A549 (cell line): ENCODE measurements at regions of chr16 and their contacts with region 1.

Region 1: GRCh38 chr16:84062734-84063640 is 20.4 kb upstream of the SLC38A8 start:
- DNase-seq: peak; percentile 78 to 82
- ATAC-seq: peak; percentile 90 to 99
- H3K4me3 ChIP-seq: no peak overlapping the region
- H3K27ac ChIP-seq: no peak overlapping the region
- H3K4me1 ChIP-seq: no peaks in the 10 kb centered on the region
- CTCF ChIP-seq: peak; percentile 83
- EP300 ChIP-seq: no peak
- POLR2A ChIP-seq: no peak
- RAD21 ChIP-seq: peak; percentile 51 to 54; a peak in 4 of 5 replicates

Region 2: GRCh38 chr16:83762141-83762991 is 300.6 kb before region 1 on chr16:
- CTCF ChIA-PET with region 1: no interaction called
- POLR2A ChIA-PET with region 1: no interaction called
- DNase-seq: no peak
- ATAC-seq: no peak
- H3K4me3 ChIP-seq: no peak overlapping the region
- H3K27ac ChIP-seq: no peak overlapping the region
- H3K4me1 ChIP-seq: no peaks in the 10 kb centered on the region
- CTCF ChIP-seq: no peak
- EP300 ChIP-seq: no peak
- POLR2A ChIP-seq: no peak
- RAD21 ChIP-seq: no peak

Region 3: GRCh38 chr16:83952940-83953795 is 109.8 kb before region 1 on chr16 and contains the start of gene OSGIN1:
- CTCF ChIA-PET with region 1: interaction called, 414 read pairs
- POLR2A ChIA-PET with region 1: no interaction called
- DNase-seq: peak; percentile 90 to 97
- ATAC-seq: peak; percentile 76 to 84
- H3K4me3 ChIP-seq: peak within 1 kb of the TSS; percentile 67
- H3K27ac ChIP-seq: peak within 1 kb of the TSS; percentile 93 to 98
- H3K4me1 ChIP-seq: peaks cover 38% of the 10 kb centered on the region
- CTCF ChIP-seq: no peak
- EP300 ChIP-seq: peak in 1 of 2 experiments; percentile 60; a peak in 1 of 5 replicates
- POLR2A ChIP-seq: peak; percentile 96
- RAD21 ChIP-seq: no peak
- polyA plus RNA-seq, gene OSGIN1: 23.9 and 25.9 TPM in 2 replicates

Region 4: DNA sequence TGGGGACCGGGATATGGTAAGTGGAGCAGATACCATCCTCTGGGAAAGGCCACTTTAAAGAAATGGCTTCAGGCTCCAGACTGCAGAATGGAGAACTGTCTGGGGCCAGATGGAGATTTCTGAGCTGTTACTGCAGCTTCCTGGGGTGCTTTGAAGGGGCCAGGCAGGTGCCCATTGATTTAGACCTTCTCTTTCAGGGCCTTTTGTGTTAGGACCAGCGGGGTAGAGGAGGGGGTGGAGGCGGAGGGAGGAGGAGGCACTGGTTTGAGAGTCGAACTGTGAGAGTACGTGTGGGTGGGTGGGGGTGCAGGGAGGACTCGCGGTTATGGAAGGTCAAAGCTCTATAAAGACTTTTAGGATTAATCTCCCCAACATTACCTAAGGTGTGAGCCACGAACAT is 83.5 kb before region 1 on chr16:
- CTCF ChIA-PET with region 1: interaction called, 27 read pairs
- POLR2A ChIA-PET with region 1: no interaction called
- DNase-seq: no peak
- ATAC-seq: no peak
- H3K4me3 ChIP-seq: no peak overlapping the region
- H3K27ac ChIP-seq: no peak overlapping the region
- H3K4me1 ChIP-seq: no peaks in the 10 kb centered on the region
- CTCF ChIP-seq: no peak
- EP300 ChIP-seq: no peak
- POLR2A ChIP-seq: no peak
- RAD21 ChIP-seq: no peak

Region 5: DNA sequence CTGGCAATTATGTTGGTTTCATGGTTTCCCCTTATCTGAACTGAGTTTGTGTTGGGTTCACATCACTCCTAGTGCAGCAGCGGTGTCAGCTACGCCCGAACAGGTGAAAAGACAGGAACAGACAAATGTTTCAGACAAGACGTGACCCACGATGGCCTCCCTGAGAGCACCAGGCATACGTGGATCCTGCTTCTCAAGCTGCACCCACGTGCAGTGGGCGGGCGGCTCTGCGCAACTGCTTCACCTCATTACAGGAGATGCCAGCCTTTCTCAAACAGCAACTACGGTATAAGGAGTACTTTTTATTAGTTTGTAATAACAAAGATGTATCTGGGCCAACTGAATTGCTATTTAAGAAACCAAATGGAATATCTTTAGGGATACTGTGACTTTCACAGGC is 12.4 kb after region 1 on chr16:
- CTCF ChIA-PET with region 1: interaction called, 48 read pairs
- POLR2A ChIA-PET with region 1: no interaction called
- DNase-seq: no peak
- ATAC-seq: no peak
- H3K4me3 ChIP-seq: no peak overlapping the region
- H3K27ac ChIP-seq: no peak overlapping the region
- H3K4me1 ChIP-seq: no peaks in the 10 kb centered on the region
- CTCF ChIP-seq: no peak
- EP300 ChIP-seq: no peak
- POLR2A ChIP-seq: no peak
- RAD21 ChIP-seq: no peak

Region 6: DNA sequence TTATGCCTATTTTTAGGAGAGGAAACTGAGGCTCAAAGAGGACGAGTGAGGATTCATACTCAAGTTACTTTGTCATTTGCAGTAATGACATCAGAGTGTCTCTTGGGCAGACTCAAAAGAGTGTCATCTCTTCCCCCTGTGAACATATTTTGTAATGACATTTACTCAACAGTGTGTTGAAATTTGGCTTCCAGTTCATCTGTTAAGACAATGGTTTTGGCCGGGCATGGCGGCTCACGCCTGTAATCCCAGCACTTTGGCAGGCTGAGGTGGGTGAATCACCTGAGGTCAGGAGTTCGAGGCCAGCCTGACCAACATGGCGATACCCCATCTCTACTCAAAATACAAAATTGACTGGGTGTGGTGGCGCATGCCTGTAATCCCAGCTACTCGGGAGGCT is 260.6 kb after region 1 on chr16:
- CTCF ChIA-PET with region 1: no interaction called
- POLR2A ChIA-PET with region 1: no interaction called
- DNase-seq: no peak
- ATAC-seq: no peak
- H3K4me3 ChIP-seq: no peak overlapping the region
- H3K27ac ChIP-seq: no peak overlapping the region
- H3K4me1 ChIP-seq: no peaks in the 10 kb centered on the region
- CTCF ChIP-seq: no peak
- EP300 ChIP-seq: no peak
- POLR2A ChIP-seq: no peak
- RAD21 ChIP-seq: no peak